ENCODE measurements at regions of chr2 and their contacts with region 1.

Region 1: DNA sequence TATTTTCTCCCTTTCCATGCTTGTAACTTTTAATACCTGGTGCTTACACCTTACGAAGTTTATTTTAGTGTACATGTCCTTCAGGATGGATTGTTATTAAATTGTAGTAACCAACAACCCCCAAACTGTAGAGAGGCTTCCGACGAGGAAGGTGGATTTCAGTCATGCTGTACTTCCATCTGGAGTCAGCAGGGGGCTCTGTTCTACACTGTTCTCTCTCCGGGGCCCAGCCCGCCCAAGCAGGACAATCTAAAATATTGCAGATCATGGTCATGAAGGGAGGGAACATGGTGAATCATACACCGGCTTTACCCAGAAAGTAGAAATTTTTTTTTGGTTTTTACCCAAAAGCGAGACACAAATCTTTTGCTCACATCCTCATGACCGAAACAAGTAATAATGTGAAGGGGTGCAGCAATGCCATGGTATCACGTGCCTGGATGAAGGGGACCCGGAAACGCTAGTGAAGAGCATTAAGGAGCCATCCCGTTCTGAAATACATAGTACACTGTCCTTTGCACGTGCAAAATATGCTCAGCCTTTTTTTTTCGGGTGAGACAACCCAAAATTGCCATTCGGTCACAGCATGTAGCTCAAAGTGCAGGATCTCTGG is 884.8 kb downstream of the EPHA4 start:
- DNase-seq: peak; percentile 39
- ATAC-seq: peak; percentile 94
- H3K4me3 ChIP-seq: no peak overlapping the region
- H3K27ac ChIP-seq: no peak overlapping the region
- H3K4me1 ChIP-seq: no peaks in the 10 kb centered on the region
- H3K27me3 ChIP-seq: no peaks in the 10 kb centered on the region
- CTCF ChIP-seq: peak; percentile 84
- EP300 ChIP-seq: no peak
- POLR2A ChIP-seq: no peak
- RAD21 ChIP-seq: peak; percentile 46; the same call in 1 of the 2 replicates

Region 2: GRCh38 chr2:221573430-221574230 is 886.3 kb after region 1 on chr2:
- CTCF ChIA-PET with region 1: interaction called, 33 read pairs
- POLR2A ChIA-PET with region 1: no interaction called
- in situ Hi-C with region 1: loop called (anchors 5 kb)
- intact Hi-C with region 1: loop called (anchors 1 kb)
- DNase-seq: peak; percentile 36
- ATAC-seq: peak; percentile 97
- H3K4me3 ChIP-seq: peak overlapping the region; percentile 2 to 68 (median 37); a peak in 3 of 6 replicates
- H3K27ac ChIP-seq: no peak overlapping the region
- H3K4me1 ChIP-seq: peaks cover 7% of the 10 kb centered on the region
- H3K27me3 ChIP-seq: peaks cover 4 to 45% of the 10 kb centered on the region in 2 experiments; a peak in 4 of 5 replicates
- CTCF ChIP-seq: peak; percentile 100
- EP300 ChIP-seq: no peak
- POLR2A ChIP-seq: no peak
- RAD21 ChIP-seq: peak; percentile 98

Region 3: GRCh38 chr2:221969087-221969829 is 1281.9 kb after region 1 on chr2:
- CTCF ChIA-PET with region 1: no interaction called
- POLR2A ChIA-PET with region 1: no interaction called
- in situ Hi-C with region 1: loop called (anchors 10 kb)
- intact Hi-C with region 1: loop called (anchors 1 kb)
- DNase-seq: peak; percentile 30
- ATAC-seq: peak; percentile 90
- H3K4me3 ChIP-seq: no peak overlapping the region
- H3K27ac ChIP-seq: no peak overlapping the region
- H3K4me1 ChIP-seq: no peaks in the 10 kb centered on the region
- H3K27me3 ChIP-seq: no peaks in the 10 kb centered on the region
- CTCF ChIP-seq: peak; percentile 64
- EP300 ChIP-seq: no peak
- POLR2A ChIP-seq: no peak
- RAD21 ChIP-seq: peak; percentile 39; the same call in 1 of the 2 replicates

Measured in HepG2 (cell line).